AG04449 (cell line): ENCODE measurements at regions of chr14 and their contacts with region 1.

Region 1: GRCh38 chr14:74459289-74459946 is 33.4 kb upstream of the SYNDIG1L start:
- DNase-seq: no peak
- H3K4me3 ChIP-seq: no peak overlapping the region
- CTCF ChIP-seq: peak; percentile 85

Region 2: DNA sequence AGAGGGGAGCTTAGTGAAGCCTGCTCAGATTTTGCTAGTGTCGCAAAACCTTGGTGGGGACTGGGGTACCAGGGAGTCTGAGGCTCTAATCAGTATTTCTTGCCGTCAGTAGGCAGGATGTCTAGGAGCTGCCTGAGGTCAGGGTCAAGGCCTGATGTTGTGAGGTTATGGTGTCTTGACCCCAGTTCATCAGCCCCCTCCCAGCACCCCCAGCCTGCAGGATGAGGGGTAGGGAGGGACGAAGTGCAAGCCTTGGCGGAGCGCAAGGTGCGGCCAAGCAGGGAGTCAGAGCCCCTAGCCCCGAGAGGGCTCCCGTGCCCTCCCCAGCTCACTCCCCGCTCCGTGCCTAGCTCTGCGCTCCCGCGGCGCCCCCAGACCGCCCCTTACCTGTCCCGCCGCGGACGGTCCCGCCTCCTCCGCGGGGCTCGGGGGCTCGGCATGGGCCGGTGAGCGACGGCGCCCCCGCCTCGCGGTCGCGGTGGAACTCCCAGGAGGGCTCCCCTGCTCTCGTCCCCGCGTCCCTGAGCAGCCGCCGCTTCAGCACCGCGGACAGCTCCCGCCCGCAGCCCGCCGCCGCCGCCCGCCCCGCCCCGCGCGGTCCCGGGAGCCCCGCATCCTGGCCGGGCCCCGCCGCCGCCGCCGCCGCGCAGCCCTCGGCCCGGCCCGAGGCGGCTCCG is 33.8 kb before region 1 on chr14:
- CTCF ChIA-PET with region 1: interaction called, 10 read pairs
- POLR2A ChIA-PET with region 1: no interaction called
- DNase-seq: no peak
- H3K4me3 ChIP-seq: no peak overlapping the region
- CTCF ChIP-seq: no peak

Region 3: DNA sequence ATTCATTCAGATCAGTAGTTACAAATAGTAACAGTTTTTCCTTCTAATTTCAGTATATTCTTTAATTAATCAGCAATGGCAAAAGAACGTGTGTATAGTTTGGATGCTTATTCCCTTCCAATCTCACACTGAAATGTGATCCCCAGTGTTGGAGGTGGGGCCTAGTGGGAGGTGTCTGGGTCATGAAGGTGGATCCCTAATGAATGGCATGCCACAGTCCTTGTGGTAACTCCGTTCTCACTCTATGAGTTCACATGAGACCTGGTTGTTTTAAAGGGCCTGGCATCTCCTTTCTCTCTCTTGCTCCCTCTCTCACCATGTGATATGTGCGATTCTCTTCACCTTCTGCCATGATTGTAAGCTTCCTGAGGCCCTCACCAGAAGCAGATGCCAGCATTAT is 14.6 kb before region 1 on chr14:
- CTCF ChIA-PET with region 1: interaction called, 19 read pairs
- POLR2A ChIA-PET with region 1: no interaction called
- DNase-seq: no peak
- H3K4me3 ChIP-seq: no peak overlapping the region
- CTCF ChIP-seq: no peak

Region 4: DNA sequence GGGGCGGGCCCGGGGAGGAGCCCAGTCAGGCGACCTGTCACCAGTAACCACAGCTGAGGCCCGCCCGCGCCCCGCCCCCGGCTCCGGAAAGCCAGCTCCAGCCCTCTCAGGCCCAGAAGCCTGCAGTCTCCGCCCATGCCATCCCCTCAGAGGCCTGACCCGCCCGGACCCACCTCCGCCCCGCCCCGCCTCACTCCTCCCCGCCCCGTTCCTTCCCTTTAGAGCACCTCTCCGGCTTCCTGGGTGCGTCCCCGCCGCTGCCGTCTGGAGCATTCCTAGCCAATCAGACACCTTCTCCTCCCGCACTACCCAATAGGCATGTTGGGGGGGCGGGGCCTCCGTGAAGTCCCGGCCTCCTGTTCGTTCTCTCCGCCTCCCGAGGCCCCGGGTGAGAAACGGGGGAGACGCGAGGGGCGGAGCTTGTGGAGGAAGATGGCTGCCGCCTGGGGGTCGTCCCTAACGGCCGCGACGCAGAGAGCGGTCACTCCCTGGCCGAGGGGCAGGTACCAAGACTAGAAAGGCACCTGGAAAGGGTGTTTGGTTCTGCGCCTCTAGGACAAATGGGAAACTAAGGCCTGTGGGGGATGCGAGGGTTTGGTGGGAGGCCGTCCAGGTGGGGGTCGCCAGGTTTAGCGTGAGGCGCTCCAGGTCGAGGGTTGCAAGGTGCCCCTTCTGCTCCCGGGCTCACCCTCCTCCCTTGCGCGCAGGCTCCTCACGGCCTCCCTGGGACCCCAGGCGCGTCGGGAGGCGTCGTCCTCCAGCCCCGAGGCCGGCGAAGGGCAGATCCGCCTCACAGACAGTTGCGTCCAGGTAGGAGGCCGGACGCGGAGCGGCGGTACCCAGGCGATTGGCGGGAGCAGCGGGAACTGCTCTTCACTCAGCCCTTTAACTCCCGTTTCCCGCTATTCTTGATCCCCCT is 34.2 kb after region 1 on chr14 and contains the start of gene ISCA2:
- CTCF ChIA-PET with region 1: interaction called, 12 read pairs
- POLR2A ChIA-PET with region 1: no interaction called
- DNase-seq: peak; percentile 93
- H3K4me3 ChIP-seq: peak within 1 kb of the TSS; percentile 99
- CTCF ChIP-seq: no peak